AG04450 (cell line): ENCODE measurements at regions of chr11 and their contacts with region 1.

Region 1: DNA sequence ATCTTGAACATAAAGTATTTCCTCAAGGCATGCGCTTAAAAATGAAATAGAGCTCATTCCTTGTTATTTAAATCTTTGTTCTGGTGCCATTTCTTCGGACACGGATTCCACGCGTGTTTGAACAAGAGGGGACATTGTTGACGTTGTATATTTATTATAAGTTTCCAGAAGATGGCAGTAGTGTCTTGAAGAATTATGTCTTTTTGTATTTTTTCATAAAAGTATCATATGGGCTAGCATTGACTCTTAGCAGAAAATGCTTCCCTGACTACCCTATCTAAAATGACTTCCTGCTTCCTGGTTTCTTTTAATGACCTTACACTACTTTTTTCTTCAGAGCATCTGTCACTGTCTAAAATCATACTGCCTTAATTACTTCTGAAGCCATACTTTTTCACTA is 20.4 kb downstream of the BIRC2 start:
- DNase-seq: no peak
- H3K4me3 ChIP-seq: no peak overlapping the region
- H3K27ac ChIP-seq: no peak overlapping the region
- H3K27me3 ChIP-seq: no peaks in the 10 kb centered on the region
- CTCF ChIP-seq: 0 out of 2 replicates have a peak, but pooled peaks have one; percentile 17

Region 2: DNA sequence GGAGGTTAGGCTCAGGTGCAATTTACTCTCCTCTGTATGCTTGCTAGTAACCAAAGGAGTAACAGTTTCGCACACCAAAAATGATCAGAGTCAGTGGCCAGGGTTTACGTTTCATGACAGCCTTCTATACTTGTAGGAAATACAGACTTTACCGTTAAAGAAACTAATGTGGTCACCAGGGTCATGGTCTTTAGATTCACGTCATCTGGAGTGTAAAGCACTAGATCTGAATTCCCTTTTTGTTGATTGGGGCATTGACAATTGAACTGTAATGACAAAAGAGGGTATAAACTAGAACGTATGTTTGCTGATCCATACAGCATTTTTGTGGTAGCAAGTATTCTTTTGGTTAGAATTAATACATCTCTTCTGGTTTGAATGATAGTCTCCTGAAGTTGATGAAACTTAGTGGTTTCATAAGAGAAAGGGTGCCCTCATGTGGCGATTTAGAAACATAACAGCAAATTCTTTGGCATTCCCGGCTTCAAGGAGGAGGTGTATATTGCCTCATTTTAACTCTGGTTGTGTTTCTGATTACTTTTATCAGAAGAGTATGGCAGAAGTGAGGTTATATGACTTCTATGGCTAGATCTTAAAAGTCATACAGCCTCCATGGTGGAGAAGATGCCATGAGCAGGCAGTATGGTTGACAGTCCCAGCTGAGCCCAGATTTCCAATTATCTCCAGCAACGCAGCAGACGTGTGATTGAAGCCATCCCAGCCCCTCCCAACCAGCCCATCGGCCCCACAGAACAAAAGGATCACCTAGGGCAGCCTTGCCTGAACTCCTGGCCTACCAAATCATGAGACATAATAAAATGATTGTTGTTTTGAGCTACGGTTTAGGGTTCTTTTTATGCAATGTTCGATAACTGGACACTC is 128.0 kb after region 1 on chr11:
- CTCF ChIA-PET with region 1: interaction called, 21 read pairs
- POLR2A ChIA-PET with region 1: no interaction called
- DNase-seq: peak; percentile 75
- H3K4me3 ChIP-seq: no peak overlapping the region
- H3K27ac ChIP-seq: no peak overlapping the region
- H3K27me3 ChIP-seq: peaks cover 3% of the 10 kb centered on the region
- CTCF ChIP-seq: peak; percentile 62

Region 3: GRCh38 chr11:102589047-102589459 is 221.7 kb after region 1 on chr11:
- CTCF ChIA-PET with region 1: no interaction called
- POLR2A ChIA-PET with region 1: no interaction called
- DNase-seq: no peak
- H3K4me3 ChIP-seq: no peak overlapping the region
- H3K27ac ChIP-seq: no peak overlapping the region
- H3K27me3 ChIP-seq: no peaks in the 10 kb centered on the region
- CTCF ChIP-seq: no peak